ENCODE measurements at regions of chr1 and their contacts with region 1.

Region 1: DNA sequence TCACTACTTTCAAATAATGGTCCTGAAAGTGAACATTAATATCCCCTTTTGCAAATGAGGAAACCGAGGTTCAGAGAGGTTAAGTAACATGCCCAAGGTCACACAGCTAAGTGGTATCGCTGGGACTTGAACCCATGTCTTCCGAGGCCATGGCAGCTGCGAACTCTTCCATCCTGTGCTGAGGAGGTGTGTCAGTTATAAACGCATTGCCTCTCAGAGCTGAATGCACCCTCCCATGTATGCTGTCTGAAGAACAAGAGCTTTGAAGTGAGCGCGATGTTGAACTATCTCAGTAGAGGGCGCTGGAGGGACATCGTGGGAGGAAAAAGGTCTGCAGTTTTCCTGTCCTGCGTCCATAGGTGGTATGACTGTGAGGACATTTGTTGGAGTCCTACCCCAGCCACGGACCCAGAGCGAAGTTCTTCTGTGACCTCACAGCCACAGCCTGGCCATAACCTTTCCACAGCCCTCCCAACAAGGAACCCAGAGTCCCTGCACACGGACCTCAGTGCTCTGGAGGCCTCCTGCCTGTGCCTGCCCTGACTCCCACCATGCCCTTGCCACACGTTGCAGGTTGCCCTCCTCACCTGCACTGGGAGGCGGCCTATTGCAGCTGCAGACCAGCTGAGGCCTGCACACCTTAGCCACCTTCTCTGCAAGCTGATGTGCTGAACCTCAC is 7.5 kb downstream of the MYOC start:
- DNase-seq: peak; percentile 82
- ATAC-seq: peak; percentile 86
- H3K4me3 Mint-ChIP-seq: no peak overlapping the region
- H3K27ac Mint-ChIP-seq: no peak overlapping the region
- H3K4me1 Mint-ChIP-seq: peaks cover 6% of the 10 kb centered on the region
- H3K27me3 Mint-ChIP-seq: peaks cover 8% of the 10 kb centered on the region

Region 2: GRCh38 chr1:171485375-171486047 is 159.4 kb before region 1 on chr1 and contains the start of gene PRRC2C:
- CTCF ChIA-PET with region 1: interaction called, 14 read pairs
- POLR2A ChIA-PET with region 1: no interaction called
- DNase-seq: peak; percentile 97
- ATAC-seq: peak; percentile 86
- H3K4me3 Mint-ChIP-seq: peak within 1 kb of the TSS; percentile 90
- H3K27ac Mint-ChIP-seq: peak within 1 kb of the TSS; percentile 93
- H3K4me1 Mint-ChIP-seq: peaks cover 45% of the 10 kb centered on the region
- H3K27me3 Mint-ChIP-seq: no peaks in the 10 kb centered on the region
- total RNA-seq, gene PRRC2C: 222 to 228 TPM

Region 3: DNA sequence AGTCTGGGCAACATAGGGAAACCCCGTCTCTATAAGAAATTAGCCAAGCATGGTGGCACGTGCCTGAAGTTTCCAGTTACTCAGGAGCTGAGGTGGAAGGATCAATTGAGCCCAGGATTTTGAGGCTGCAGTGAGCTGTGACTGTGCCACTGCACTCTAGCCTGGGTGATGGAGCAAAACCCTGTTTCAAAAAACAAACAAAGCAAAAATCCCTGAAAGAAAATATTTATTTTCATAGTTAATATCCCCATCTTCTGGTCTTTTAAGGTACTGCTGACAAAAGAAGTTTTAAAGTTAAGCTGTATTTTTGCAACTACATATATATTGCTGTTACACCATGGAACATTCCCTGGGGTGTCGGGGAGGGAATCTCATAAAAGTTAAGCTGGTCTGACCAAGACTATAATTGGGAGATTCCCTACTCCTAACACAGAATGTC is 70.9 kb after region 1 on chr1:
- CTCF ChIA-PET with region 1: interaction called, 20 read pairs
- POLR2A ChIA-PET with region 1: no interaction called
- DNase-seq: no peak
- ATAC-seq: no peak
- H3K4me3 Mint-ChIP-seq: no peak overlapping the region
- H3K27ac Mint-ChIP-seq: no peak overlapping the region
- H3K4me1 Mint-ChIP-seq: no peaks in the 10 kb centered on the region
- H3K27me3 Mint-ChIP-seq: no peaks in the 10 kb centered on the region

Region 4: GRCh38 chr1:171801487-171801891 is 156.5 kb after region 1 on chr1:
- CTCF ChIA-PET with region 1: interaction called, 21 read pairs
- POLR2A ChIA-PET with region 1: no interaction called
- DNase-seq: no peak
- ATAC-seq: no peak
- H3K4me3 Mint-ChIP-seq: no peak overlapping the region
- H3K27ac Mint-ChIP-seq: no peak overlapping the region
- H3K4me1 Mint-ChIP-seq: peaks cover 6% of the 10 kb centered on the region
- H3K27me3 Mint-ChIP-seq: no peaks in the 10 kb centered on the region

Region 5: DNA sequence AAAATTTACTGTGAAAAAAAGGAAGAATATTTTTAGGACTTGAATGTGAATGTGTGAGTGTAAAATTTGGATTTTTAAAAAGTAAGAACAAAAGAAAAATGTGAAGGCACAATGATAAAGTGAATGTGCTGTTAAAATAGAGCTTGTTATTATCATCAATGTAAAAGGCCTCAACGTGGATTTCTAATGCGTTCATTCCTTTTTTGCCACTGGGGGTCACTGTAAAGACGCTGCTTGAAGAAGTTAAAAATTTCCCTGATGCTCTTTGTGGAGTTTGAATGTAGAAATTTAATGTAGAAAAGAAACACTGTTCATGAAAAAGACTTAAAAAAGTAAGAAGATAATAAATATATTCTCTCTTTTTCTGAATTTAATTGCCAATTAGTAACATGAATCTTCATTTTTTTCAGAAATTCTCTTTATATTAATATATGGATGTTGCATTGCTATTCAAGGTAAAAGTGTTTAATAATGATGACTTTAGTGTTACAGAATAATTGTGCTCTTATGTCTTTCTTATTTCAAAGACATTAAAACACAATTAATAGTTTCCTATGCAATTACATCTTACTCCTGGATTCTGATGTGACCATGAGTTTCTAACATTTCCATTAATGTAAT is 357.9 kb after region 1 on chr1:
- CTCF ChIA-PET with region 1: interaction called, 10 read pairs
- POLR2A ChIA-PET with region 1: no interaction called
- DNase-seq: peak; percentile 49
- ATAC-seq: no peak
- H3K4me3 Mint-ChIP-seq: no peak overlapping the region
- H3K27ac Mint-ChIP-seq: no peak overlapping the region
- H3K4me1 Mint-ChIP-seq: peaks cover 1% of the 10 kb centered on the region
- H3K27me3 Mint-ChIP-seq: no peaks in the 10 kb centered on the region